ENCODE measurements at regions of chr7 and their contacts with region 1.

Region 1: DNA sequence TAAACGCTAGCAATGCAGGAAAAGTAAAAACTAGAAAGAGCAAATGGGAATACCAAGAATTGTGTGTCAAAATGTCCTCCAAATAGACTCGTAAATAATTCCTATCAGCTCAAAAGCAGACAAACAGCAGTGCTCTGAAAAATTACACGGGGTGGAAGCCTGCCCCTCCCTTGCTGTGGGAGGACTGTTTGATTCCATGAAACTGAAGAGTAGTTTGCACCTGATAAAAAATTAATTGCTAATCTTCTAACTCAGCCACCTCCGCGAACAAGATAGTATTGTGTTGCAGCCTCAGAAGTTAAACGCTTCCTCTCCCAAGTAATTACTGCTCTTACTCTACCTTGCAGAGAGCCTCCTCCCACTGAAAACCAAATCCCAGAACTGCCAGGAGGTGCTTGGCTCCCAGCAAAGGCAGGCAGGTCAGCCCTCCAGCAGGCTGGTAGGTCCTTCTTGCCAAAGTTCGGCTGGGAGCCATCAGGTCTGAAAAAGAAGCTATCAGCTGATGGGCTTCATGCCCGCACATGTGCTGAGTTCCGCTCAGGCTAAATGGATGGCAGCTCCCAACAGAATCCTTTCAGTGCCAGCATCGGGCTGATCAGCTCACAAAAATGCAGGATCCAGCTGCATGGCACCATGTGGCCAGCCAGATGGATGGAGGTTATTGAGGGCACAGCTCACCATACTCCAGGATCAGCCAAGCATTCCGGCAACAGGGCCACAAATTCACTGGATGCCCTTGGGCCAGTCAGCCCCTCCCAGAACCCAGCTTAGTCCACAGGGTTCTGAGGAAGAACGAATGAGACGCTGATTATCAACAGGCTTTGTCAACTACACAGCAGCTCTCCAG is 37.1 kb downstream of the MAD1L1 start:
- DNase-seq: no peak
- ATAC-seq: no peak
- H3K4me3 ChIP-seq: no peak overlapping the region
- H3K27ac ChIP-seq: no peak overlapping the region
- H3K4me1 ChIP-seq: no peaks in the 10 kb centered on the region
- CTCF ChIP-seq: no peak
- EP300 ChIP-seq: no peak
- POLR2A ChIP-seq: no peak
- RAD21 ChIP-seq: no peak

Region 2: DNA sequence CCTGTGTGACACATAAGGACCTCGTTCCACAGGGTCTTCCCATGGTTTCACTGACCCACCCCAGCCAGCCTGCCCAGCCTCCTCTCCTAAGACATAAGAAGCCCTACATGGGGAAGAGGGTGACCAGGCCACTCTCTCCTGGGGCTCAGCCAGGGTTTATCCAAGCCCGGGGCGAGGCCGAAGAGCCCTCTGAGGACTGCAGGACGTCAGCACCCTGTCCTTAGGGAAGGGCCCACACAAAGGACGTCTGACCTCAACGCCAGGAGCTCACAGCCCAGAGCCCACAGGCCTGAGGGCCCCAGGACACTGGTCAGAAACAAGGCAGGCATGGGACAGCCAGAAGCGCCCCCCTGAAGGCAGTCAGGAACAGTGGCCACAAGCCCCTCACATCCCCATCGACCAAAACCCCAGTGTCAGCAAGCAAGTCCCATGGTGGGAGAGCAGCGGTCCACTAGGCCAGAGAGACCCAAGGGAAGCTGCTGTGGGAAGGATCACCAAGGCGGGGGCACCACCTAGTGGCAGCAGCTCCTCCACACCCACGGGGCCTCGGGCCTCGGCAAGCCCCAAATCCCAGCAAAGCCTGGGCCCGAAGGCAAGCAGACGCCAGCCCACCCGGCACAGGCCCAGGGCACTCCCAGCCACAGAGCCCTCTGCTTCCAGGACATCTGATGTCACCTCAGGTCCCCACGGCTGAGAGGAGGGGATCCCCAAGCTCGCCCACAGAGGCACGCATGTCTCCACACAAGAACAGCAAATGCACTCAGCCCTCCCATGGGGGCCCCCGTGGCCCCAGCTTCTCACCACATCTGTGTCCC is 13.7 kb after region 1 on chr7:
- CTCF ChIA-PET with region 1: interaction called, 13 read pairs
- POLR2A ChIA-PET with region 1: no interaction called
- DNase-seq: peak; percentile 52 to 70
- ATAC-seq: peak; percentile 69 to 94; a peak in 5 of 6 replicates
- H3K4me3 ChIP-seq: no peak overlapping the region
- H3K27ac ChIP-seq: no peak overlapping the region
- H3K4me1 ChIP-seq: no peaks in the 10 kb centered on the region
- CTCF ChIP-seq: peak; percentile 72
- EP300 ChIP-seq: no peak
- POLR2A ChIP-seq: no peak
- RAD21 ChIP-seq: peak; percentile 81 to 84

Measured in A549 (cell line).